Activated CD8-positive, alpha-beta memory T cell treated with anti-CD3 and anti-CD28 coated beads, Interleukin-2, amount 10 ng/mL, durations not matched to agents 7 days and 5 days (primary cell): ENCODE measurements at regions of chr20 and their contacts with region 1.

Region 1: DNA sequence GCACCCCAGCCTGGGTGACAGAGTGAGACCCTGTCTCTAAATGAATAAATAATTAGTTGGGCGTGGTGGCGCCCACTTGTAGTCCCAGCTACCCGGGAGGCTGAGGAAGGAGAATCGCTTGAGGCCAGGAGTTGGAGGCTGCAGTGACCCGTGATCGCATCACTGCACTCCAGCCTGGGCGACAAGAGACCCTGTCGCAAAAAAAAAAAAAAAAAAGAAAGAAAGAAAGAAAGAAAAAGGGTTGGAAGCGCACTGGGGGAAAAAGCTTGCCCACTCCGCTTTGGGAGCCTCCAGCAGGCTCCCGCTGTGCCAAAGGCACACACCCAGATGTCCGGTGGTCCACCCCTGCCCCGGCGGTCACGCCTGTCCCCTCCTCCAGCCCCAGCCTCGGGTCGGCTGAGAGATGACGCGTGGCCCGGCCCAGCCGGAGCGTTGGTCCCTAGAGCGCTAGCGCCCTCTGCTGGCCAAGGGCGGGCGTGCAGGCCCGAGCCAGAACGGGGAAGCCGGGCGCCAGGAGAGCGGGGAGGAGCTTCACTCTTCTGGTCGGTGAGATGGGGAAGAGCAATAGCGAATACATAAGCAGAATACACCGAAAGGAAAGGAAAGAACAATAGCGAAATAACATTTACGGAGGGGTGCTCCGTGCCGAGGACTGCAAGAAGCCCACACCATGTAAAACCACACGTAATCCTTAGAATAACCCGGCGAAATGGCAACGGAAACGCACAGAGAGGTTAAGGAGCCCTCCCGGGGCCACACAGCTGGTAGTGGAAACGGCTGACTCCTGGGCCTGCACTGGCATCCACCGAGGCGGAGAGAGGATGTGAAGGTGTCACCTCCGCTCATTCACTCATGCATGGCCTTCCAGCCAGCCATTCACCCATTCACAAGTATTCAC is 41.7 kb downstream of the UBE2V1 start:
- DNase-seq: peak; percentile 91
- ATAC-seq: peak; percentile 99
- H3K4me3 Mint-ChIP-seq: peak overlapping the region; percentile 59
- H3K27ac Mint-ChIP-seq: no peak overlapping the region
- H3K4me1 Mint-ChIP-seq: peaks cover 4% of the 10 kb centered on the region
- H3K27me3 Mint-ChIP-seq: peaks cover 4% of the 10 kb centered on the region

Region 2: GRCh38 chr20:49989234-49990065 is 81.8 kb before region 1 on chr20:
- CTCF ChIA-PET with region 1: interaction called, 481 read pairs
- DNase-seq: no peak
- ATAC-seq: no peak
- H3K4me3 Mint-ChIP-seq: no peak overlapping the region
- H3K27ac Mint-ChIP-seq: no peak overlapping the region
- H3K4me1 Mint-ChIP-seq: no peaks in the 10 kb centered on the region
- H3K27me3 Mint-ChIP-seq: peaks cover under 1% of the 10 kb centered on the region

Region 3: GRCh38 chr20:50085452-50086365 is 14.5 kb after region 1 on chr20:
- CTCF ChIA-PET with region 1: interaction called, 37 read pairs
- DNase-seq: peak; percentile 54
- ATAC-seq: peak; percentile 79
- H3K4me3 Mint-ChIP-seq: peak overlapping the region; percentile 11
- H3K27ac Mint-ChIP-seq: peak overlapping the region; percentile 81
- H3K4me1 Mint-ChIP-seq: peaks cover 26% of the 10 kb centered on the region
- H3K27me3 Mint-ChIP-seq: no peaks in the 10 kb centered on the region

Region 4: GRCh38 chr20:50110141-50110925 is 39.1 kb after region 1 on chr20:
- CTCF ChIA-PET with region 1: interaction called, 15 read pairs
- DNase-seq: peak; percentile 92
- ATAC-seq: peak; percentile 58
- H3K4me3 Mint-ChIP-seq: peak overlapping the region; percentile 89
- H3K27ac Mint-ChIP-seq: peak overlapping the region; percentile 98
- H3K4me1 Mint-ChIP-seq: peaks cover 79% of the 10 kb centered on the region
- H3K27me3 Mint-ChIP-seq: no peaks in the 10 kb centered on the region

Region 5: DNA sequence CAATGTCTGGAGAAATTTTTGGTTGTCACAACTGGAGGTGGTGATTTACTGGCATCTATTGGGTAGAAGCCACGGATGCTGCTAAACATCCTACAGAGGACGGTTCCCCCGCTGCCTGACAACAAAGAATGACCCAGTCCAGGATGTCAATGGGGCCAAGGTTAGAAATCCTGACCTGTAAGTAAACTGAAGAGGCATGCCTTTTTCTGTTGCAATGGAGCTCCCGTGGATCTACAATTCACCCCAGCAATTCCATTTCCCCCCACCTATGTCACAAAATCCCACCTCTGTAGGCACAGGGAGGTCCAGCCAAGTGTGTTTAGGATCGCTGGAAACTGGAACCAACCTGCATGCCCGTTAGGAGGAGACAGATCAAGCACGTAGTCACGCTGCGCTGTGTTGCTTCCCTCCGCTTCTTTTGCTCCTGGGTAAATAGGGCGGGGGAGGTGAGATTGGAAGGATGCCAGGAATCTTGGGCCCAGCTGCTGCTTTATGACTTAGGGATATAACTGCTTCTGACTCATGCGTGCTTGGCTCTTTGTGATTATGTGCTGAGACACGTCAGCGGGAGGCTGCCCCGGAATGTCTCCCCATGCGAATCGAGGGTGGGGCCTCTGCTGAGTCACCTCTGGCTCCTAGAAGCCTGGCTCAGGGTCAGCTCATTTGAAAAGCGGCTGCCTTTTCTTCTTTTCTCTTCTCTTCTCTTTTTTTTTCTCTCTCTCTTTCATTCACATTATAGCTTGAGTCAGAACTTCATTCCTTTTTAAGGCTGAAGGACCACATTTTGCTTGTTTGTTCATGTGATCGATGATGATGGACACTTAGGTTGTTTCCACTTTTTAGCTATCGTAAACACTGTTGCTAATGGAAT is 94.7 kb after region 1 on chr20:
- CTCF ChIA-PET with region 1: interaction called, 17 read pairs
- DNase-seq: peak; percentile 92
- ATAC-seq: peak; percentile 99
- H3K4me3 Mint-ChIP-seq: peak overlapping the region; percentile 76
- H3K27ac Mint-ChIP-seq: peak overlapping the region; percentile 83
- H3K4me1 Mint-ChIP-seq: peaks cover 15% of the 10 kb centered on the region
- H3K27me3 Mint-ChIP-seq: peaks cover 3% of the 10 kb centered on the region